Heart left ventricle (tissue), 16 donors: ENCODE measurements at regions of chr10 and their contacts with region 1.

Region 1: GRCh38 chr10:103578782-103579382 is 85.4 kb downstream of the NEURL1 start:
- DNase-seq: peak in 1 of 5 donors; percentile 13
- ATAC-seq: no peak
- H3K4me3 ChIP-seq: no peak overlapping the region
- H3K27ac ChIP-seq: no peak overlapping the region
- H3K4me1 ChIP-seq: peaks cover 0 to 12% (median 6%) of the 10 kb centered on the region in 12 donors
- H3K27me3 ChIP-seq: peaks cover 0 to 9% (median 0%) of the 10 kb centered on the region in 9 donors
- CTCF ChIP-seq: no peak
- POLR2A ChIP-seq: no peak

Region 2: GRCh38 chr10:103433858-103434257 is 145.0 kb before region 1 on chr10:
- intact Hi-C with region 1: loop called in 1 of 10 experiments (anchors 10 kb)
- DNase-seq: peak in 4 of 5 donors; percentile 49 to 66 (median 58)
- ATAC-seq: peak in 2 of 4 donors; percentile 64 to 68
- H3K4me3 ChIP-seq: no peak overlapping the region
- H3K27ac ChIP-seq: peak overlapping the region in 1 of 12 donors; percentile 24
- H3K4me1 ChIP-seq: peaks cover 0 to 16% (median 0%) of the 10 kb centered on the region in 12 donors
- H3K27me3 ChIP-seq: no peaks in the 10 kb centered on the region
- CTCF ChIP-seq: no peak
- POLR2A ChIP-seq: no peak

Region 3: GRCh38 chr10:103558883-103559674 is 19.8 kb before region 1 on chr10:
- intact Hi-C with region 1: loop called in 1 of 10 experiments (anchors 2 kb)
- DNase-seq: no peak
- ATAC-seq: no peak
- H3K4me3 ChIP-seq: no peak overlapping the region
- H3K27ac ChIP-seq: no peak overlapping the region
- H3K4me1 ChIP-seq: peaks cover 0 to 18% (median 7%) of the 10 kb centered on the region in 12 donors
- H3K27me3 ChIP-seq: peaks cover 0 to 16% (median 0%) of the 10 kb centered on the region in 9 donors
- CTCF ChIP-seq: no peak
- POLR2A ChIP-seq: no peak

Region 4: GRCh38 chr10:104028146-104028545 is 449.3 kb after region 1 on chr10:
- intact Hi-C with region 1: no loop called
- DNase-seq: peak in 2 of 5 donors; percentile 46 to 53
- ATAC-seq: peak; percentile 78 to 87 (median 86)
- H3K4me3 ChIP-seq: no peak overlapping the region
- H3K27ac ChIP-seq: peak overlapping the region; percentile 10 to 86 (median 78)
- H3K4me1 ChIP-seq: peaks cover 0 to 27% (median 18%) of the 10 kb centered on the region in 12 donors
- H3K27me3 ChIP-seq: no peaks in the 10 kb centered on the region
- CTCF ChIP-seq: peak in 11 of 12 donors; percentile 31 to 65 (median 45)
- POLR2A ChIP-seq: no peak